Activated CD8-positive, alpha-beta T cell treated with anti-CD3 and anti-CD28 coated beads, Interleukin-2, amount 10 ng/mL, durations not matched to agents 7 days and 5 days (primary cell): ENCODE measurements at regions of chr11 and their contacts with region 1.

Region 1: DNA sequence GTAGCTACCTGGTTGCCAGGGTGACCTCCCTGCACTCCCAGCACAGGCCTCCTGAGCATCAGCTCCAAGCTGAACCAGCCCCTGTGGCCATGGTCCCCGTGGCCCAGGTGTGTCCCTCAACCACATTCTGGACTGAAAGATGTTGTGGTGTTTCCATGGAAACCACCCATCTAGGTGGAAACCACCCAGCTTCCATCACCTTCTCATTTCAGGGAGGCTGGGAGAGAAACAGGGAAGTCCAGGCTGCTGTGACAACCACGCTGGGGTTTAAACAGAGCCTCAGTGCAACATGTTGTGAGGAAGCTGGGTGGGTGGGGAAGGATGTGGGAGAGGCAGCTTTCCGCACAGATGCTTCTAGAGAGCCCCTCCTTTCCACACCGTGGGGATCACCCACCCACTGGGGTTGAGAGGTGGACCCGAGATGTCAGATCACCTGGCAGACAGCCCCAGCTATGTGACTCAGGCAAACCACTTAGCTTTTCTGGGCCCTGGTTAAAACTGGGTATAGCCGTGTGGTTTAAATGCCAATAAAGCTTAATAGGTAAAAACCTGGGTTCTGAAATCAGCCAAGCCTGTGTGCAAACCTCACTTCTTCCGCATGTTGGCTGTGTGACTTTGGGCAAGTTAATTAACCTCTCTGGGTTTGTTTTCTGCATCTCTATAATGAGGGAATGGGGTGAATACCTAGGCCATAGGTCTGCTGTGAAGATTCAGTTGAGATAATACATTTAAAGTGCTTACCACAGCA is 46.4 kb downstream of the CD82 start:
- DNase-seq: peak; percentile 84
- ATAC-seq: peak; percentile 76
- H3K4me3 Mint-ChIP-seq: no peak overlapping the region
- H3K27ac Mint-ChIP-seq: peak overlapping the region; percentile 77
- H3K4me1 Mint-ChIP-seq: peaks cover 79% of the 10 kb centered on the region
- H3K27me3 Mint-ChIP-seq: no peaks in the 10 kb centered on the region

Region 2: GRCh38 chr11:44529895-44530412 is 81.9 kb before region 1 on chr11:
- CTCF ChIA-PET with region 1: no interaction called
- POLR2A ChIA-PET with region 1: no interaction called
- DNase-seq: no peak
- ATAC-seq: peak; percentile 14
- H3K4me3 Mint-ChIP-seq: peak overlapping the region; percentile 58
- H3K27ac Mint-ChIP-seq: peak overlapping the region; percentile 89
- H3K4me1 Mint-ChIP-seq: peaks cover 27% of the 10 kb centered on the region
- H3K27me3 Mint-ChIP-seq: peaks cover 7% of the 10 kb centered on the region

Region 3: DNA sequence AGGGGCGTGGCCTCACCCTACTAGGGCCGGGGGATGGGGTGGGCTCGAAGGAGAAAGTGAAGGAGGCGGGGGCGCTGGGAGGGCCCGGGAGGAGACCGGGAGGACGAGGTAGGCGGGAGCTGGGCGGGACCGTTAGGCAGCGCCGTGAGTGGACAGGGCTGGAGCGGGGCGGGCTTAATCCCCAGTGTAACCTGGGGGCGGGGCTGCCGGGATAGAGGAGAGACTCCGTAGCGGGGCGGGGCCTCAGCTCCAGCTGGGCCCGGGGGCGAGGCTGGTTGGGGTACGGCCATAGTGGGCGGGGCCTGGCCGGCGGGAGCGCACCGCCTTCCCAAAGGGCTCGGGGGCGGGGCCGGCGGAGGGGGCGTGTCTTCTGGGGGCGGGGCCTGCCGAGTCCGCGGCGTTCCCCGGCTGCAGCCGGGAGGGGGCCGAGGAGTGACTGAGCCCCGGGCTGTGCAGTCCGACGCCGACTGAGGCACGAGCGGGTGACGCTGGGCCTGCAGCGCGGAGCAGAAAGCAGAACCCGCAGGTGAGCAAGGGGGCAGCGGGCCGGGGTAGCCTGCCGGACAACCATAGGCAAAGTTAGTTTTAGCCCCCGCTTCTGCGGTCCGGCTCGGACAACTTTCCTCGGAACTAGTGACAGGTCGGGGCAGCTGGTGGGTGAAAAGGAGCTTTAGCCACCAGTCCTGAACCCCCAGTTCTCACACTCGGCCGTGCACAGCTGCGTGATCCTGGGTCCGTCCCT is 46.5 kb before region 1 on chr11 and contains the start of gene CD82:
- CTCF ChIA-PET with region 1: interaction called, 334 read pairs
- POLR2A ChIA-PET with region 1: interaction called, 11 read pairs
- DNase-seq: peak; percentile 99
- ATAC-seq: peak; percentile 88
- H3K4me3 Mint-ChIP-seq: peak within 1 kb of the TSS; percentile 87
- H3K27ac Mint-ChIP-seq: peak within 1 kb of the TSS; percentile 84
- H3K4me1 Mint-ChIP-seq: peaks cover 72% of the 10 kb centered on the region
- H3K27me3 Mint-ChIP-seq: no peaks in the 10 kb centered on the region
- total RNA-seq, gene CD82: 68.2 to 72.9 TPM

Region 4: GRCh38 chr11:44574610-44575287 is 37.1 kb before region 1 on chr11:
- CTCF ChIA-PET with region 1: interaction called, 25 read pairs
- POLR2A ChIA-PET with region 1: interaction called, 11 read pairs
- DNase-seq: peak; percentile 79
- ATAC-seq: peak; percentile 75
- H3K4me3 Mint-ChIP-seq: peak overlapping the region; percentile 64
- H3K27ac Mint-ChIP-seq: peak overlapping the region; percentile 94
- H3K4me1 Mint-ChIP-seq: peaks cover 95% of the 10 kb centered on the region
- H3K27me3 Mint-ChIP-seq: no peaks in the 10 kb centered on the region

Region 5: GRCh38 chr11:44911029-44911814 is 299.4 kb after region 1 on chr11:
- CTCF ChIA-PET with region 1: interaction called, 11 read pairs
- POLR2A ChIA-PET with region 1: no interaction called
- DNase-seq: peak; percentile 91
- ATAC-seq: peak; percentile 82
- H3K4me3 Mint-ChIP-seq: no peak overlapping the region
- H3K27ac Mint-ChIP-seq: no peak overlapping the region
- H3K4me1 Mint-ChIP-seq: no peaks in the 10 kb centered on the region
- H3K27me3 Mint-ChIP-seq: peaks cover 3% of the 10 kb centered on the region